ENCODE measurements at regions of chrX and their contacts with region 1.

Region 1: GRCh38 chrX:47193475-47194193 is at the start of gene UBA1:
- DNase-seq: peak; percentile 69 to 97 (median 95)
- ATAC-seq: peak; percentile 89
- H3K4me3 ChIP-seq: peak within 1 kb of the TSS; percentile 82
- H3K4me3 Mint-ChIP-seq: peak within 1 kb of the TSS; percentile 94 to 100 (median 98)
- H3K27ac ChIP-seq: peak within 1 kb of the TSS; percentile 94
- H3K27ac Mint-ChIP-seq: peak within 1 kb of the TSS; percentile 95 to 100 (median 98)
- H3K4me1 ChIP-seq: peaks cover 16 to 25% of the 10 kb centered on the region in 2 donors
- H3K4me1 Mint-ChIP-seq: peaks cover 19 to 77% (median 53%) of the 10 kb centered on the region in 7 donors
- H3K27me3 ChIP-seq: no peaks in the 10 kb centered on the region
- H3K27me3 Mint-ChIP-seq: no peaks in the 10 kb centered on the region
- total RNA-seq, gene UBA1: 98.0 to 183 (median 118) TPM

Region 2: DNA sequence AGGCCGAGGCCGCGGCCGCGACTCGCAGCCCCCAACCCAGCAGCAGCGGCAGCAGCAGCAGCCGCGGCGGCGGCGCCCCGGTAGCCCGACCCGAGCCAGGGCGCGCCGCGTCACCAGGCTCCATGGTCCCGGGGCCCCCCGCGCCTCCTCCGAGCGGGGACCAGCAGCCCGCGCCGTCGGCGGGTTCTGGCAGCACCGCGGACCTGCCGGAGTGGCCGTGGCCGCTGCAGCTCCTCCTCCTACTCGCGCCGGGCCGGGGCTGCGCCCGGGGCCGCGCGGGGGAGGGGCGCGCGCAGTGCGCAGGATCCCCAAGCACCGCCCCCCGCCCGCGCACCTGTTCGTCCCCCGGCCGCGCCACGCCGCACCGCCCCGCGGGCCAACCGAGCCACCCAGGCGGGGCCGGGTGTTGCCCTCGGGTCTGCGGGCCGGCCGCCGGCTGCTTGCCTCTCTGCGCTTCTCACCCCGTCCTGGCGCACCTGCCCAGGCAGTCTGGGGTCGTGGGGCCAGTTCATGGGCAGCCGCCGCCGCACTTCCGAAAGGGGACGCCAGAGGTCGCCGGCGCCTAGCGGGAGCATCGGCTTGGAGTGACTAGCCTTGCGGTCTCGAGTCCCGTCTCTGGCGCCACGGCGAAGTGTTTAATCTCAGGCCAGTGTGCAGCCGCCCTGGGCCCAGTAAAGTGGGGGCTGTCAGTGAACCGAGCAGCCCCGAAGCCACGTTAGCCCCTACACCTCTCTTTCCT is 434.6 kb before region 1 on chrX and contains the start of gene SLC9A7:
- CTCF ChIA-PET with region 1: no interaction called
- POLR2A ChIA-PET with region 1: no interaction called
- intact Hi-C with region 1: loop called in 1 of 2 experiments (anchors 5 kb)
- DNase-seq: peak; percentile 55 to 81 (median 75)
- ATAC-seq: peak; percentile 89
- H3K4me3 ChIP-seq: peak within 1 kb of the TSS; percentile 61
- H3K4me3 Mint-ChIP-seq: peak within 1 kb of the TSS; percentile 87 to 98 (median 90)
- H3K27ac ChIP-seq: peak within 1 kb of the TSS; percentile 41
- H3K27ac Mint-ChIP-seq: peak within 1 kb of the TSS in 8 of 9 donors; percentile 15 to 95 (median 72)
- H3K4me1 ChIP-seq: peaks cover 0 to 4% of the 10 kb centered on the region in 2 donors
- H3K4me1 Mint-ChIP-seq: peaks cover 4 to 24% (median 13%) of the 10 kb centered on the region in 7 donors
- H3K27me3 ChIP-seq: no peaks in the 10 kb centered on the region
- H3K27me3 Mint-ChIP-seq: peaks cover 0 to 18% (median 3%) of the 10 kb centered on the region in 5 donors
- total RNA-seq, gene SLC9A7: 3.0 to 11.3 (median 4.4) TPM

Region 3: GRCh38 chrX:47093248-47093647 is 100.4 kb before region 1 on chrX:
- CTCF ChIA-PET with region 1: no interaction called
- POLR2A ChIA-PET with region 1: no interaction called
- intact Hi-C with region 1: no loop called
- DNase-seq: peak in 4 of 9 donors; percentile 1 to 19 (median 15)
- ATAC-seq: no peak
- H3K4me3 ChIP-seq: no peak overlapping the region
- H3K4me3 Mint-ChIP-seq: no peak overlapping the region
- H3K27ac ChIP-seq: no peak overlapping the region
- H3K27ac Mint-ChIP-seq: no peak overlapping the region
- H3K4me1 ChIP-seq: no peaks in the 10 kb centered on the region
- H3K4me1 Mint-ChIP-seq: peaks cover 0 to 17% (median 11%) of the 10 kb centered on the region in 7 donors
- H3K27me3 ChIP-seq: no peaks in the 10 kb centered on the region
- H3K27me3 Mint-ChIP-seq: no peaks in the 10 kb centered on the region

Region 4: DNA sequence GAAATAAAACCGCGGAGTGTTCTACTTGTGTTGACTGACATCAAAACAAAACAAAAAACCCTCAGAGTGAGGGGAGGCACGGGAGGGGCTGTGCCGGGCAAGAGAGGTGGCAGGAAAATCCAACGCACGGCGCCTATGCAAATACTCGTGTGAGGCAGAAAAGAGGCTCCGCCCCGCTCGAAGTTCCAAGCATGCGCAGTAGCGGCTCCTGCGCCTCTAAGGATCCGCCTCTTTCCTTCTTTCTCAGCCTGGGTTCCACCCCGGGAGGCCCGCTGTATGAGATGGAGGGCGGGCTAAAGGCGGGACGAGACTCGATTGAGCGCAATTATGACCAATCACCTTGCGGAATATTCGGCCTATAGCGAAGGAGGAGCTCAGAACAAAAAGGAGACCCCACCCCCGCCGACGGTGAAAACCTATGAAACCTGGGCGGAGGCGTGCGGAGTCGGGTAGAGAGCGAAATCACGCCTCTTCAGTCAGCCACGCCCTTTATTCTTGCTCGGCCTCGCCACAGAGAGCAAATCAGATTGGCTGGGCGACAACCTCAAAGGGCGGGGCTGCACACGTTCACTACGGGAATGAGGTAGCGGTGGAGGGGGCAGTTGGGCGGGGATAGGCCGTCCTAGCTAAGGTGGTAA is 24.1 kb after region 1 on chrX:
- CTCF ChIA-PET with region 1: no interaction called
- POLR2A ChIA-PET with region 1: interaction called, 8 read pairs
- intact Hi-C with region 1: loop called (anchors 1 kb)
- DNase-seq: peak in 8 of 9 donors; percentile 81 to 100 (median 98)
- ATAC-seq: peak; percentile 86
- H3K4me3 ChIP-seq: peak overlapping the region; percentile 98
- H3K4me3 Mint-ChIP-seq: peak overlapping the region; percentile 89 to 99 (median 95)
- H3K27ac ChIP-seq: peak overlapping the region; percentile 97
- H3K27ac Mint-ChIP-seq: peak overlapping the region; percentile 98 to 100 (median 99)
- H3K4me1 ChIP-seq: peaks cover 16 to 20% of the 10 kb centered on the region in 2 donors
- H3K4me1 Mint-ChIP-seq: peaks cover 26 to 44% (median 41%) of the 10 kb centered on the region in 7 donors
- H3K27me3 ChIP-seq: no peaks in the 10 kb centered on the region
- H3K27me3 Mint-ChIP-seq: peaks cover 0 to 2% (median 0%) of the 10 kb centered on the region in 5 donors

Region 5: DNA sequence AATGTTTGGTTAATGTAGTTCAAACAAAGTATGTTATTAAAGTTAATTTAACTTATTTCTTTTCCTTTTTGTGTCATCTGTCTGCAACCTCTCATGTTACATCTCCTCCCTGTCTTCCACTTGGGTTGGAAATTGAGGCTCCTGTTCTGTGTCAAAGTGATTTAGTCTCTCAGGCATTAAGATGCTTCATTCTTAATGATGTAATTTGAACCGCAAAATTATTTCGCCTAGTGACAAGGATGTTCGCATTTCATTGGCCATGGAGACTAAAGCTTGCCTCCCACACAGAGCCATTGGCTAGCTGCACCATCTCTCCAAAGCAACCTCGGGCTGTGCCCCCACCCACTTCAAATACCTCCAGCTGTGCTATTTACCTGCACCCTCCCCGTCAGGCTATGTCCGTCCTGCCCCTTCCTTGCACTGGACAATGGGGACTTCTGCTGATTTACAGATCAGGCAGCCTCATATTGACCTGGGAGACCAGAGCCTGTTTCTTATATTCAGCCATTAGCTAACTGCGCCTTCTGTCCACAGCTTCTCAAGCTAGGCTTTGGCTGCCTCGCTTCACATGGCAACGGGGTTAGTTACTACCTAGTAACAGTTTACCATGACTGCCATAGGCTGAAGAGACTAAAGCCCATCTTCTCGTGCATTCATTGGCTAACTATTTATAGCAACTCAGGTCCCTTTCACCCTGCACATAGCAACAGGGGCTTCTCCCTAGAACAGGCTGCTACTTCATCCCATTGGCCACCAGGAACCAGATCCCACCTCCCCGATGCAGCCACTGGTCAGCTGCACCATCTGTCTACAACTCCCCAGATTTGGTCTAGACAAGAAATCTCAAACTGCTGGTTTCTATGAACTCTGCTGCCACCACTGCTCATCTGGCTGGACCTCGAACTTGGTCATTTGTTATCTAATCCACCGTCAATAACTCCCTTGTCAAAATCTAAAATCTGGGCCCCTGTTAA is 168.2 kb after region 1 on chrX:
- CTCF ChIA-PET with region 1: no interaction called
- POLR2A ChIA-PET with region 1: no interaction called
- intact Hi-C with region 1: loop called (anchors 1 kb)
- DNase-seq: peak in 3 of 9 donors; percentile 8 to 16 (median 10)
- ATAC-seq: peak; percentile 75
- H3K4me3 ChIP-seq: no peak overlapping the region
- H3K4me3 Mint-ChIP-seq: peak overlapping the region in 5 of 10 donors; percentile 3 to 29 (median 24)
- H3K27ac ChIP-seq: no peak overlapping the region
- H3K27ac Mint-ChIP-seq: peak overlapping the region in 4 of 9 donors; percentile 15 to 40 (median 31)
- H3K4me1 ChIP-seq: peaks cover 6 to 9% of the 10 kb centered on the region in 2 donors
- H3K4me1 Mint-ChIP-seq: peaks cover 10 to 48% (median 30%) of the 10 kb centered on the region in 7 donors
- H3K27me3 ChIP-seq: no peaks in the 10 kb centered on the region
- H3K27me3 Mint-ChIP-seq: no peaks in the 10 kb centered on the region

Region 6: GRCh38 chrX:47523297-47523696 is 329.7 kb after region 1 on chrX:
- CTCF ChIA-PET with region 1: interaction called, 6 read pairs
- POLR2A ChIA-PET with region 1: interaction called, 14 read pairs
- intact Hi-C with region 1: loop called (anchors 1 kb)
- DNase-seq: peak; percentile 50 to 85 (median 66)
- ATAC-seq: peak; percentile 99
- H3K4me3 ChIP-seq: peak overlapping the region; percentile 43
- H3K4me3 Mint-ChIP-seq: peak overlapping the region; percentile 66 to 82 (median 74)
- H3K27ac ChIP-seq: peak overlapping the region; percentile 3
- H3K27ac Mint-ChIP-seq: peak overlapping the region in 3 of 9 donors; percentile 42 to 47 (median 43)
- H3K4me1 ChIP-seq: no peaks in the 10 kb centered on the region
- H3K4me1 Mint-ChIP-seq: peaks cover 0 to 8% (median 0%) of the 10 kb centered on the region in 7 donors
- H3K27me3 ChIP-seq: no peaks in the 10 kb centered on the region
- H3K27me3 Mint-ChIP-seq: peaks cover 0 to 2% (median 0%) of the 10 kb centered on the region in 5 donors

Region 7: GRCh38 chrX:47650164-47651042 is 456.8 kb after region 1 on chrX and contains the start of gene ELK1:
- CTCF ChIA-PET with region 1: no interaction called
- POLR2A ChIA-PET with region 1: no interaction called
- intact Hi-C with region 1: loop called in 1 of 2 experiments (anchors 1 kb)
- DNase-seq: peak; percentile 67 to 92 (median 88)
- ATAC-seq: peak; percentile 95
- H3K4me3 ChIP-seq: peak within 1 kb of the TSS; percentile 70
- H3K4me3 Mint-ChIP-seq: peak within 1 kb of the TSS; percentile 87 to 96 (median 90)
- H3K27ac ChIP-seq: peak within 1 kb of the TSS; percentile 85
- H3K27ac Mint-ChIP-seq: peak within 1 kb of the TSS; percentile 89 to 97 (median 95)
- H3K4me1 ChIP-seq: peaks cover 12 to 16% of the 10 kb centered on the region in 2 donors
- H3K4me1 Mint-ChIP-seq: peaks cover 35 to 52% (median 48%) of the 10 kb centered on the region in 7 donors
- H3K27me3 ChIP-seq: no peaks in the 10 kb centered on the region
- H3K27me3 Mint-ChIP-seq: no peaks in the 10 kb centered on the region
- total RNA-seq, gene ELK1: 29.3 to 62.4 (median 38.1) TPM

Region 8: GRCh38 chrX:47836164-47837072 is 642.8 kb after region 1 on chrX and contains the start of gene ZNF81:
- CTCF ChIA-PET with region 1: no interaction called
- POLR2A ChIA-PET with region 1: no interaction called
- intact Hi-C with region 1: loop called in 1 of 2 experiments (anchors 10 kb)
- DNase-seq: peak; percentile 73 to 91 (median 83)
- ATAC-seq: peak; percentile 96
- H3K4me3 ChIP-seq: peak within 1 kb of the TSS; percentile 67
- H3K4me3 Mint-ChIP-seq: peak within 1 kb of the TSS; percentile 96 to 99 (median 98)
- H3K27ac ChIP-seq: peak within 1 kb of the TSS; percentile 79
- H3K27ac Mint-ChIP-seq: peak within 1 kb of the TSS; percentile 94 to 99 (median 97)
- H3K4me1 ChIP-seq: peaks cover 4 to 6% of the 10 kb centered on the region in 2 donors
- H3K4me1 Mint-ChIP-seq: peaks cover 1 to 36% (median 26%) of the 10 kb centered on the region in 7 donors
- H3K27me3 ChIP-seq: no peaks in the 10 kb centered on the region
- H3K27me3 Mint-ChIP-seq: no peaks in the 10 kb centered on the region
- total RNA-seq, gene ZNF81: 11.0 to 14.7 (median 11.7) TPM